B cell (primary cell): ENCODE measurements at regions of chr21 and their contacts with region 1.

Region 1: GRCh38 chr21:32826329-32827167 is 55.0 kb upstream of the PAXBP1 start:
- DNase-seq: peak; percentile 64
- ATAC-seq: peak; percentile 66
- H3K4me3 ChIP-seq: no peak overlapping the region
- H3K4me3 Mint-ChIP-seq: no peak overlapping the region
- H3K27ac ChIP-seq: no peak overlapping the region
- H3K27ac Mint-ChIP-seq: no peak overlapping the region
- H3K4me1 ChIP-seq: no peaks in the 10 kb centered on the region
- H3K4me1 Mint-ChIP-seq: no peaks in the 10 kb centered on the region
- H3K27me3 ChIP-seq: peaks cover 0 to 2% (median 0%) of the 10 kb centered on the region in 4 experiments
- H3K27me3 Mint-ChIP-seq: peaks cover 13% of the 10 kb centered on the region
- CTCF ChIP-seq: peak; percentile 72

Region 2: GRCh38 chr21:32569261-32570230 is 257.0 kb before region 1 on chr21:
- CTCF ChIA-PET with region 1: no interaction called
- POLR2A ChIA-PET with region 1: no interaction called
- intact Hi-C with region 1: loop called (anchors 1 kb)
- DNase-seq: peak; percentile 78
- ATAC-seq: peak; percentile 84
- H3K4me3 ChIP-seq: peak overlapping the region; percentile 52 to 80 (median 74)
- H3K4me3 Mint-ChIP-seq: peak overlapping the region; percentile 88
- H3K27ac ChIP-seq: no peak overlapping the region
- H3K27ac Mint-ChIP-seq: peak overlapping the region; percentile 1
- H3K4me1 ChIP-seq: peaks cover 4 to 6% of the 10 kb centered on the region in 2 donors
- H3K4me1 Mint-ChIP-seq: peaks cover 10% of the 10 kb centered on the region
- H3K27me3 ChIP-seq: peaks cover 0 to 19% (median 9%) of the 10 kb centered on the region in 4 experiments
- H3K27me3 Mint-ChIP-seq: peaks cover 33% of the 10 kb centered on the region
- CTCF ChIP-seq: peak; percentile 91

Region 3: GRCh38 chr21:32653311-32653901 is 173.1 kb before region 1 on chr21:
- CTCF ChIA-PET with region 1: interaction called, 25 read pairs
- POLR2A ChIA-PET with region 1: no interaction called
- intact Hi-C with region 1: no loop called
- DNase-seq: peak; percentile 56
- ATAC-seq: peak; percentile 39
- H3K4me3 ChIP-seq: no peak overlapping the region
- H3K4me3 Mint-ChIP-seq: no peak overlapping the region
- H3K27ac ChIP-seq: no peak overlapping the region
- H3K27ac Mint-ChIP-seq: no peak overlapping the region
- H3K4me1 ChIP-seq: no peaks in the 10 kb centered on the region
- H3K4me1 Mint-ChIP-seq: no peaks in the 10 kb centered on the region
- H3K27me3 ChIP-seq: no peaks in the 10 kb centered on the region
- H3K27me3 Mint-ChIP-seq: no peaks in the 10 kb centered on the region
- CTCF ChIP-seq: peak; percentile 75

Region 4: GRCh38 chr21:32658524-32658923 is 168.0 kb before region 1 on chr21:
- CTCF ChIA-PET with region 1: interaction called, 25 read pairs
- POLR2A ChIA-PET with region 1: no interaction called
- intact Hi-C with region 1: no loop called
- DNase-seq: no peak
- ATAC-seq: no peak
- H3K4me3 ChIP-seq: no peak overlapping the region
- H3K4me3 Mint-ChIP-seq: no peak overlapping the region
- H3K27ac ChIP-seq: no peak overlapping the region
- H3K27ac Mint-ChIP-seq: no peak overlapping the region
- H3K4me1 ChIP-seq: no peaks in the 10 kb centered on the region
- H3K4me1 Mint-ChIP-seq: no peaks in the 10 kb centered on the region
- H3K27me3 ChIP-seq: no peaks in the 10 kb centered on the region
- H3K27me3 Mint-ChIP-seq: no peaks in the 10 kb centered on the region
- CTCF ChIP-seq: no peak

Region 5: DNA sequence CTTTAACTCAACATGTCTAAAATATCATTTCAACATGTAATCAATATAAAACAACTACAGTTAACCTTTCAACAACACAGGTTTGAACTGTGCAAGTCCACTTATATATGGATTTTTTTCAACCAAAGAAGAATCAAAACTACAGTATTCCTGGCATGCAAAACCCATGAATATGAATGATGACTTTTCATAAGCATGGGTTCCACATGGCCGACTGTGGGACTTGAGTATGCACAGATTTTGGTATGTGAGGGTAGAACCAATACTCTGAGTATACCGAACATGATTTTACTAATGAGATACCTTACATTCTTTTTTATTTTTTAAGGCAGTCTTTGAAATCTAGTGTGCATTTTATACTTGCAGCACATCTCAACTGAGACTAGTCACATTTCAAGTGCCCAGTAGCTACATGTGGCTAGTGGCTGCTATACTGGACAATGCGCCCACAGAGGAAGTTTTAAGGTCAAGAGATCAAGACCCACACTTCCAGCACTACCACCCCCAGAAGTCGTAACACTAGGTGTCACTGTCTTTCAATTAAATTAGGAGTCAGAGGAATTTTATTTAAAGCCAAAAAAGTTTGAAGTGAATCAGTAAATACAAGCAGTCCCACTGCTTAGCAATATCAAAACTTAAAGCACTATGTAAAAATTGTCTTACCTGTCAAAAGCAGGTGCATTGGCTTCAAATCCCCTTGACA is 138.8 kb before region 1 on chr21:
- CTCF ChIA-PET with region 1: interaction called, 6 read pairs
- POLR2A ChIA-PET with region 1: no interaction called
- intact Hi-C with region 1: loop called (anchors 1 kb)
- DNase-seq: peak; percentile 17
- ATAC-seq: no peak
- H3K4me3 ChIP-seq: no peak overlapping the region
- H3K4me3 Mint-ChIP-seq: no peak overlapping the region
- H3K27ac ChIP-seq: no peak overlapping the region
- H3K27ac Mint-ChIP-seq: no peak overlapping the region
- H3K4me1 ChIP-seq: no peaks in the 10 kb centered on the region
- H3K4me1 Mint-ChIP-seq: no peaks in the 10 kb centered on the region
- H3K27me3 ChIP-seq: no peaks in the 10 kb centered on the region
- H3K27me3 Mint-ChIP-seq: no peaks in the 10 kb centered on the region
- CTCF ChIP-seq: peak; percentile 30

Region 6: DNA sequence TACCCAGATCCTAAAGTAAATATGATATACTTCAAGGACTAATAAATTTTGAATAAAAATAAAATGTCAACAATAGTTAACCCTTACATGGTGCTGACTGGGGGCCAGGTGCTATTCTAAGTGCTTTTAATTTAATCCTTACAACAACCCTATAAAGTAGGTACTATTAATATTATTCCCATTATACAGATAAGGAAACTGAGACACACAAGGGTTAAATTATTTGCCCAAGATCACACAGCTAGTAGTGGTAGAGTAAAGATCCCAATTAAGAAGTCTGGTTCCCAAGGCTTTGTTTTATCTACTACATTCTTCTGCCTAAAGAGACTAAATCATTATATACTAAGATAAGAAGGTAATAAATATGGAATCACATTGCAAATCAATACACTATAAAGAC is 133.0 kb before region 1 on chr21:
- CTCF ChIA-PET with region 1: interaction called, 12 read pairs
- POLR2A ChIA-PET with region 1: no interaction called
- intact Hi-C with region 1: loop called (anchors 1 kb)
- DNase-seq: no peak
- ATAC-seq: no peak
- H3K4me3 ChIP-seq: no peak overlapping the region
- H3K4me3 Mint-ChIP-seq: no peak overlapping the region
- H3K27ac ChIP-seq: no peak overlapping the region
- H3K27ac Mint-ChIP-seq: no peak overlapping the region
- H3K4me1 ChIP-seq: no peaks in the 10 kb centered on the region
- H3K4me1 Mint-ChIP-seq: no peaks in the 10 kb centered on the region
- H3K27me3 ChIP-seq: no peaks in the 10 kb centered on the region
- H3K27me3 Mint-ChIP-seq: no peaks in the 10 kb centered on the region
- CTCF ChIP-seq: no peak